Naive thymus-derived CD4-positive, alpha-beta T cell (primary cell): ENCODE measurements at regions of chr19 and their contacts with region 1.

Region 1: DNA sequence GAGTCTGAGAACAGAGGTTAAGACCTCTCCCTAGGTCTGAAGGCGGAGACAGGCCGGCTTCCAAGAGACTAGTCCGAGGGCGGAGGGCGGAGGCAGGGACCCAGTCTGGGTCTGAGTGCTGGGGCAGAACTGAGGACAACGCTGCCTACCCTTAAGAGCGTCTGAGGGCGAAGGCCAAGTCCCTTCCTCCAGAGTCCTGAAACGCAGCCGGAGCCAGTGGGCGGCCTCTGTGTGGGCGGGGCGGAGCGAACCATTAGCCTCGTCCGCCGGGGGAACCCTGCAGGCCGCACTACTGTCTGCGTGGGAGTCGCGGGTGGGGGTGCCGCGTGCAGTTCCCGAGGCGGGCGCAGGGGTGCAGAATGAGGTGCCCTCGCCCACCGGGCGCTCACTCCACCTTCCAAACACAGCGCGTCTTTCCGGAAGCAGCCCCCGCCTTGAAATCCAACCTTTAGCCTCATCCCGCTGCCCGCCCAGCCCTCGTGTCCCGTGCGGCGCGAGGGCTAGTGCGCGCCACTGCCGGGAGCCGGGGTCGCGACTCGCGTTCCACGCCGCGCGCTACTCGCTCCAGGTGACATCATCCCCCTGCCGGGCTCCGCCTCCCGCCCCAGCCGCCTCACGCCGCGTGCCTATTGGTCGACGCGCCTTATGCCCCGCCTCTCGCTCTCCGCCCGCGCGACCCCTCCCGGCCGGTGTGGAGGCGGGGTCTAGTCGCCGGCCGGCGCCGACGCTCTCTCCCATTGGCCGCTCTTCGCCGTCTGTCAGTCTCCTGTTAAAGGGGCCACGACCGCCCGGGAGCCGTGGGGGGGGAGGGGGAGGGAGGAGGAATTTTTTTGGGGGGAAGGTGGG is at the start of gene C19orf73:
- DNase-seq: peak; percentile 93 to 98 (median 97)
- ATAC-seq: peak; percentile 91
- H3K4me3 ChIP-seq: peak within 1 kb of the TSS; percentile 83
- H3K4me3 Mint-ChIP-seq: peak within 1 kb of the TSS; percentile 83 to 91 (median 88)
- H3K27ac ChIP-seq: peak within 1 kb of the TSS; percentile 92
- H3K27ac Mint-ChIP-seq: peak within 1 kb of the TSS; percentile 89 to 95 (median 93)
- H3K4me1 ChIP-seq: peaks cover 13 to 16% of the 10 kb centered on the region in 2 donors
- H3K4me1 Mint-ChIP-seq: peaks cover 25 to 43% (median 39%) of the 10 kb centered on the region in 7 donors
- H3K27me3 ChIP-seq: no peaks in the 10 kb centered on the region
- H3K27me3 Mint-ChIP-seq: peaks cover 0 to 27% (median 0%) of the 10 kb centered on the region in 5 donors
- total RNA-seq, gene C19orf73: 1.3 to 2.8 (median 2.2) TPM

Region 2: GRCh38 chr19:48670699-48671445 is 447.9 kb before region 1 on chr19:
- CTCF ChIA-PET with region 1: no interaction called
- POLR2A ChIA-PET with region 1: no interaction called
- intact Hi-C with region 1: no loop called
- DNase-seq: no peak
- ATAC-seq: no peak
- H3K4me3 ChIP-seq: no peak overlapping the region
- H3K4me3 Mint-ChIP-seq: no peak overlapping the region
- H3K27ac ChIP-seq: no peak overlapping the region
- H3K27ac Mint-ChIP-seq: peak overlapping the region in 1 of 9 donors; percentile 52
- H3K4me1 ChIP-seq: peaks cover 6 to 7% of the 10 kb centered on the region in 2 donors
- H3K4me1 Mint-ChIP-seq: peaks cover 6 to 8% (median 8%) of the 10 kb centered on the region in 7 donors
- H3K27me3 ChIP-seq: no peaks in the 10 kb centered on the region
- H3K27me3 Mint-ChIP-seq: no peaks in the 10 kb centered on the region

Region 3: DNA sequence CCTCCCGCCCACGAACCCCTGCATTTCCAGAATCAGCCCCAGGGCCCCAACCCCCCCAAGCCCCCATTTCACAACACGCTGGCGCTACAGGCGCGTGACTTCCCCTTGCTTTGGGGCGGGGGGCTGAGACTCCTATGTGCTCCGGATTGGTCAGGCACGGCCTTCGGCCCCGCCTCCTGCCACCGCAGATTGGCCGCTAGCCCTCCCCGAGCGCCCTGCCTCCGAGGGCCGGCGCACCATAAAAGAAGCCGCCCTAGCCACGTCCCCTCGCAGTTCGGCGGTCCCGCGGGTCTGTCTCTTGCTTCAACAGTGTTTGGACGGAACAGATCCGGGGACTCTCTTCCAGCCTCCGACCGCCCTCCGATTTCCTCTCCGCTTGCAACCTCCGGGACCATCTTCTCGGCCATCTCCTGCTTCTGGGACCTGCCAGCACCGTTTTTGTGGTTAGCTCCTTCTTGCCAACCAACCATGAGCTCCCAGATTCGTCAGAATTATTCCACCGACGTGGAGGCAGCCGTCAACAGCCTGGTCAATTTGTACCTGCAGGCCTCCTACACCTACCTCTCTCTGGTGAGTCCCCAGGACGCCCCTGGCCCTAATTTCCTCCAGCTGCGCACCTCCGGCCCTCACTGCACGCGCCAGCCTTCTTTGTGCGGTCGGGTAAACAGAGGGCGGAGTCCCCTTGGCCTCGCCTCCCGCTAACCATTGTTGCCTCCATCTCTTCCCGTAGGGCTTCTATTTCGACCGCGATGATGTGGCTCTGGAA is 153.6 kb before region 1 on chr19 and contains the start of gene FTL:
- CTCF ChIA-PET with region 1: no interaction called
- POLR2A ChIA-PET with region 1: interaction called, 4 read pairs
- intact Hi-C with region 1: loop called in 1 of 2 experiments (anchors 1 kb)
- DNase-seq: peak; percentile 77 to 93 (median 84)
- ATAC-seq: peak; percentile 85
- H3K4me3 ChIP-seq: peak within 1 kb of the TSS; percentile 86
- H3K4me3 Mint-ChIP-seq: peak within 1 kb of the TSS; percentile 94 to 100 (median 99)
- H3K27ac ChIP-seq: peak within 1 kb of the TSS; percentile 73
- H3K27ac Mint-ChIP-seq: peak within 1 kb of the TSS; percentile 93 to 100 (median 97)
- H3K4me1 ChIP-seq: peaks cover 30 to 37% of the 10 kb centered on the region in 2 donors
- H3K4me1 Mint-ChIP-seq: peaks cover 42 to 69% (median 62%) of the 10 kb centered on the region in 7 donors
- H3K27me3 ChIP-seq: no peaks in the 10 kb centered on the region
- H3K27me3 Mint-ChIP-seq: no peaks in the 10 kb centered on the region
- total RNA-seq, gene FTL: 888 to 1,929 (median 1,286) TPM

Region 4: DNA sequence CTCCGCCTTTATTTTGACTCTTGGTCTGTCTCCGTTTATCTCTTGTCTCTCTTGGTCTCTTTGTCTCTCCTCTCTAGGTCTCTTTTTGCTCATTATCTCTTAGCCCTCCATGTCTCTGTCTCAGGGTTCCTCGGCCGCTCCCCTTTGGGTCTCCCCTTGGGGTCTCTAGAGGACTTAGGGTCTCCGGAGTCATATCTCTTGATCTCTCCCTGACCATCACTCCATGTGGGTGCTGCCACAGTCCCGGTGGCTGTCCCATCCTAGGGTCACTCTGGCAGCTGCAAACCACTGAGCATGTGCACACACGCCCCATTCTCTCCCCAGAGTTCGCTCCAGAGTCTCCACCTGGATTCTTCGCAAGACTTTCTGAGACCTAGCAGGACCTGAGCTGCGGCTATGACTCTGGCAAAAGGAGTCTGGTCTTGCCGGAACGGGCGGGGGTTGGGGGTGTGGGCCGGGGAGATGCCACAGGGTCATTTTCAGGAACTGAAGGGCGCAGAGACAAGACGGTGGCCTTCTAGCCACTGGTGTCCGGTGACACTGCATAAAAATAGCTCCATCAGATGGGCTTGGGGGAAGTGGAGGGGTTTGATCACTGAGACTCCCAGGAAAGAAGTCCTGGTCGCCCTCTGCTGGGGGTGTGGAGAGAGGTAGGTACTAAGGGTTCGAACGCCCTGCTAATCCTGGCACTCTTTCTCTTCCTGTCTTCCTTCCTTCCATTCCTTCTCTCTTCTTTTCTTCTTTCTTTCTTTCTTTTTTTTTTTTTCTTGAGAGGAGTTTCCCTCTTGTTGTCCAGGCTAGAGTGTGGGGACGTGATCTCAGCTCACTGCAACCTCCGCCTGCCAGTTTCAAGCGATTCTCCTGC is 45.0 kb before region 1 on chr19:
- CTCF ChIA-PET with region 1: no interaction called
- POLR2A ChIA-PET with region 1: no interaction called
- intact Hi-C with region 1: no loop called
- DNase-seq: no peak
- ATAC-seq: no peak
- H3K4me3 ChIP-seq: no peak overlapping the region
- H3K4me3 Mint-ChIP-seq: peak overlapping the region; percentile 11 to 82 (median 72)
- H3K27ac ChIP-seq: no peak overlapping the region
- H3K27ac Mint-ChIP-seq: peak overlapping the region in 3 of 9 donors; percentile 4 to 62 (median 7)
- H3K4me1 ChIP-seq: no peaks in the 10 kb centered on the region
- H3K4me1 Mint-ChIP-seq: peaks cover 7 to 20% (median 13%) of the 10 kb centered on the region in 7 donors
- H3K27me3 ChIP-seq: peaks cover 4 to 12% of the 10 kb centered on the region in 2 donors
- H3K27me3 Mint-ChIP-seq: peaks cover 48 to 73% (median 53%) of the 10 kb centered on the region in 5 donors

Region 5: DNA sequence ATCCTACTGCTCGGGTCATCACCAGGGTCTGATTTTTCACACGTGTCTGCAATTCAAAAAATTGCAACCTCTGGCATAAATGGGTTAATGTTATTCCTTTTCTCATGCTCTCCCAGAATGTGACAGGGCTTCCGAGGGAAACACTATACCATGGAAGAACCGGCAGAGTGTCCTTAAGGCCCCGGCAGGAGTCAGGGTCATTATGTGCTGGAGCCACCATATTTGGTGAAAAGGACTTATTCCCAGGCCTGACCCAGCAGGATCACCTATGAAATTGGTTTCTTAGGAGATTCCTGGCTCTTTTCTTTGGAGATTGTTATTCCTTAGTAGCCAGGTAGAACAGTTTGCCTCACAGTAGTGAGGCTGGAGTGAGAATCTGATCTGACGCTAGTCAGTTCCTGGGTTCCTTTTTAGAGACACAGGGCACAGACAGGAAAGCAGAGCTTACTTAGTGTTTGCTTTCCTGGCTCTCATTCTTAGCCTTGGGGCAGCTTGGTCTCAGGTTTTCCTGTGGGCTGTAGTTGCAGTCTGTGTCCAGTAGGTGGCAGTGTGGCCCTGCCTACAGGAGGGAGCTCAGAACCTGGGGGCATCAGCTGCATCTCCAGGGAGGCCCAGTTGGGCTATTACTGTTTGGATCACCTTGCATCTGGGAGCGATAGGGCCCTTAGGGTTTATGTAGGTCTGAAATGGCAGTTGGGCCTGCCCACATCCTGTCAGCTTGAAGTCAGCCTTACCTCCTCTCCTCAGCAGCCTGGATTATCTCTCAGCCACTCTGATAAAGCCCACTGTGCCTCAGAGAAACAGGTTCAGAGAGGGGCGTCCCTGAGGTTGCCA is 21.1 kb before region 1 on chr19:
- CTCF ChIA-PET with region 1: interaction called, 17 read pairs
- POLR2A ChIA-PET with region 1: interaction called, 3 read pairs
- intact Hi-C with region 1: no loop called
- DNase-seq: peak; percentile 58 to 81 (median 73)
- ATAC-seq: peak; percentile 97
- H3K4me3 ChIP-seq: no peak overlapping the region
- H3K4me3 Mint-ChIP-seq: no peak overlapping the region
- H3K27ac ChIP-seq: no peak overlapping the region
- H3K27ac Mint-ChIP-seq: peak overlapping the region in 5 of 9 donors; percentile 8 to 67 (median 49)
- H3K4me1 ChIP-seq: peaks cover 0 to 6% of the 10 kb centered on the region in 2 donors
- H3K4me1 Mint-ChIP-seq: peaks cover 0 to 17% (median 12%) of the 10 kb centered on the region in 7 donors
- H3K27me3 ChIP-seq: no peaks in the 10 kb centered on the region
- H3K27me3 Mint-ChIP-seq: no peaks in the 10 kb centered on the region

Region 6: GRCh38 chr19:49148784-49149651 is 30.2 kb after region 1 on chr19:
- CTCF ChIA-PET with region 1: interaction called, 5 read pairs
- POLR2A ChIA-PET with region 1: no interaction called
- intact Hi-C with region 1: loop called (anchors 1 to 5 kb)
- DNase-seq: peak; percentile 39 to 83 (median 59)
- ATAC-seq: peak; percentile 75
- H3K4me3 ChIP-seq: peak overlapping the region; percentile 52
- H3K4me3 Mint-ChIP-seq: peak overlapping the region; percentile 32 to 88 (median 76)
- H3K27ac ChIP-seq: no peak overlapping the region
- H3K27ac Mint-ChIP-seq: no peak overlapping the region
- H3K4me1 ChIP-seq: peaks cover 8 to 35% of the 10 kb centered on the region in 2 donors
- H3K4me1 Mint-ChIP-seq: peaks cover 16 to 43% (median 35%) of the 10 kb centered on the region in 7 donors
- H3K27me3 ChIP-seq: peaks cover 8 to 29% of the 10 kb centered on the region in 2 donors
- H3K27me3 Mint-ChIP-seq: peaks cover 59 to 71% (median 61%) of the 10 kb centered on the region in 5 donors

Region 7: DNA sequence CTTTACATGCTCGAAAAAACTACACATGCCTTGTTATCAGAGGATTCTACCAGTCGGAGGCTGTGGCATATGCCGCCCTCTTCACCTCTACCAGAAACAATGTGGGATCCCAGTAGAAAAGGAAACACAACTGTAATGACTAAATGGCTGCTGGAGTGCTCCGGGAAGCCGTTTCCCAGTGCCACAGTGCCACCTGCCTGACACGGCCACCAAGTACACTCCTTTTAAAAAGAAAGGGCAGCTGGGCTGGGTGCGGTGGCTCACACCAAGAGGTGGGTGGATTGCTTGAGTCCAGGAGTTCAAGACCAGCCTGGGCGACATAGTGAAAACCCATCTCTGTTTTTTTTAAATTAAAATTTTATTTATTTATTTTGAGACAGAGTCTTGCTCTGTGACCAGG is 106.1 kb after region 1 on chr19:
- CTCF ChIA-PET with region 1: no interaction called
- POLR2A ChIA-PET with region 1: no interaction called
- intact Hi-C with region 1: no loop called
- DNase-seq: peak in 3 of 9 donors; percentile 15 to 33 (median 24)
- ATAC-seq: peak; percentile 56
- H3K4me3 ChIP-seq: no peak overlapping the region
- H3K4me3 Mint-ChIP-seq: no peak overlapping the region
- H3K27ac ChIP-seq: no peak overlapping the region
- H3K27ac Mint-ChIP-seq: no peak overlapping the region
- H3K4me1 ChIP-seq: peaks cover 4 to 9% of the 10 kb centered on the region in 2 donors
- H3K4me1 Mint-ChIP-seq: peaks cover 5 to 7% (median 6%) of the 10 kb centered on the region in 7 donors
- H3K27me3 ChIP-seq: no peaks in the 10 kb centered on the region
- H3K27me3 Mint-ChIP-seq: peaks cover 2 to 6% (median 4%) of the 10 kb centered on the region in 5 donors

Region 8: GRCh38 chr19:49497047-49497788 is 378.4 kb after region 1 on chr19:
- CTCF ChIA-PET with region 1: no interaction called
- POLR2A ChIA-PET with region 1: interaction called, 3 read pairs
- intact Hi-C with region 1: loop called in 1 of 2 experiments (anchors 5 kb)
- DNase-seq: peak; percentile 55 to 85 (median 77)
- ATAC-seq: peak; percentile 20
- H3K4me3 ChIP-seq: peak overlapping the region; percentile 97
- H3K4me3 Mint-ChIP-seq: peak overlapping the region; percentile 96 to 100 (median 99)
- H3K27ac ChIP-seq: peak overlapping the region; percentile 99
- H3K27ac Mint-ChIP-seq: peak overlapping the region; percentile 91 to 100 (median 98)
- H3K4me1 ChIP-seq: peaks cover 21 to 40% of the 10 kb centered on the region in 2 donors
- H3K4me1 Mint-ChIP-seq: peaks cover 32 to 64% (median 50%) of the 10 kb centered on the region in 7 donors
- H3K27me3 ChIP-seq: no peaks in the 10 kb centered on the region
- H3K27me3 Mint-ChIP-seq: peaks cover 0 to 12% (median 0%) of the 10 kb centered on the region in 5 donors

Region 9: GRCh38 chr19:49590071-49590970 is 471.5 kb after region 1 on chr19:
- CTCF ChIA-PET with region 1: no interaction called
- POLR2A ChIA-PET with region 1: no interaction called
- intact Hi-C with region 1: loop called in 1 of 2 experiments (anchors 5 kb)
- DNase-seq: peak; percentile 85 to 98 (median 97)
- ATAC-seq: peak; percentile 90
- H3K4me3 ChIP-seq: peak overlapping the region; percentile 97
- H3K4me3 Mint-ChIP-seq: peak overlapping the region; percentile 85 to 95 (median 94)
- H3K27ac ChIP-seq: peak overlapping the region; percentile 86
- H3K27ac Mint-ChIP-seq: peak overlapping the region; percentile 76 to 95 (median 93)
- H3K4me1 ChIP-seq: peaks cover 15 to 18% of the 10 kb centered on the region in 2 donors
- H3K4me1 Mint-ChIP-seq: peaks cover 26 to 42% (median 31%) of the 10 kb centered on the region in 7 donors
- H3K27me3 ChIP-seq: no peaks in the 10 kb centered on the region
- H3K27me3 Mint-ChIP-seq: peaks cover 0 to 12% (median 0%) of the 10 kb centered on the region in 5 donors